Right ventricle myocardium inferior (tissue), 1 donor: ENCODE measurements at regions of chr20 and their contacts with region 1.

Region 1: DNA sequence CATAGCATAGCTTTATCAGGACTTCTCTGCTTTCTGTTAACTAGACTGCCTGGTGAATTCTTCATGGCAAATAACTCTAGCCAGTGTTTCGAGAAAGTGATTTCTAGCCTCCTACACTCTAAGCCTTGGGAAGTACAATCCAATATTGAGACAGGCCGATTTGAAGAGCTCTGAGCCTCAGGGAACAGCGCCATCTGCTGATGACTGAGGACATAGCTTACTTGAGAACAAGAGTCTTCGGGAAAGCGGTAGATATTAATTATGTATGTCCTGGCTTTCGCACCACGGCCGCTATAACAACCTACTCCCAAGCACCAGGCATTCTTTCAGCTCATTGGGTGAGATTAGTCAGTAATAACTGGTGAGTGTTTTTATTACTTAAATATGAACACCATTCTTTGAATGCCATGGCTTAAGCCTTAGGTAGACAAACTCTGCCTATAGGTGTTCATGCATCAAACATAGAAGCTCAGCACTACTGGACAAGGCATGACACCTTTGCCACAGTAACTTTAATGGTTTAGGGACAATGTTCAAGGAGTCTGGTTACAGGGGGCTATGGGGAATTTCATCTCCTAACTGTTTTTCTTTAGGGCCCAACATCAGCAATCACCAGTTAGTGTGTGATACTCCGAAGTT is 518.6 kb downstream of the BMP2 start:
- DNase-seq: peak; percentile 75
- ATAC-seq: peak; percentile 85

Region 2: GRCh38 chr20:6142348-6142993 is 1143.6 kb before region 1 on chr20:
- intact Hi-C with region 1: loop called (anchors 5 kb)
- DNase-seq: no peak
- ATAC-seq: peak; percentile 65

Region 3: GRCh38 chr20:6828794-6829423 is 457.1 kb before region 1 on chr20:
- intact Hi-C with region 1: loop called (anchors 5 kb)
- DNase-seq: no peak
- ATAC-seq: peak; percentile 64

Region 4: GRCh38 chr20:7113577-7114466 is 172.2 kb before region 1 on chr20:
- intact Hi-C with region 1: loop called (anchors 5 kb)
- DNase-seq: no peak
- ATAC-seq: peak; percentile 90

Region 5: DNA sequence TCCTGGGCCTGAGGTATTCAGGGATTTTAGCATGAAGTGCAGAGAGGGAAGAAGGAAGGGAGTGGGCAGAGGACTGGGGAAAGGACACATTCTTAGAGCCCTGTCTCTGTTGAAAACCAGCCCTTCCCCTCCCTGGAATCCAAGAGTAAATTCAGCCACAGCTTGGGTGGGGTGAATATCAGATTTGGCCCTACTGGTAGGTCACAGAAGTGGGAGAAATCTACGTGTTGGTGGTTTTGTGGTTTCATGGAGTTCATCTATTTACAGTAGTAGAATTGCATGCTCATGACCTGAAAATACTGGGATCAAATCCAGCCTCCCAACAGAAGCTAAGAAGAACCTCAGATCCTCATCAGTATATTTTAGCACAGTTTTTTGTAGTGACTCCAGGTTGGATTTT is 114.1 kb before region 1 on chr20:
- intact Hi-C with region 1: loop called (anchors 5 kb)
- DNase-seq: no peak
- ATAC-seq: no peak